H1 (cell line): ENCODE measurements at regions of chr12 and their contacts with region 1.

Region 1: DNA sequence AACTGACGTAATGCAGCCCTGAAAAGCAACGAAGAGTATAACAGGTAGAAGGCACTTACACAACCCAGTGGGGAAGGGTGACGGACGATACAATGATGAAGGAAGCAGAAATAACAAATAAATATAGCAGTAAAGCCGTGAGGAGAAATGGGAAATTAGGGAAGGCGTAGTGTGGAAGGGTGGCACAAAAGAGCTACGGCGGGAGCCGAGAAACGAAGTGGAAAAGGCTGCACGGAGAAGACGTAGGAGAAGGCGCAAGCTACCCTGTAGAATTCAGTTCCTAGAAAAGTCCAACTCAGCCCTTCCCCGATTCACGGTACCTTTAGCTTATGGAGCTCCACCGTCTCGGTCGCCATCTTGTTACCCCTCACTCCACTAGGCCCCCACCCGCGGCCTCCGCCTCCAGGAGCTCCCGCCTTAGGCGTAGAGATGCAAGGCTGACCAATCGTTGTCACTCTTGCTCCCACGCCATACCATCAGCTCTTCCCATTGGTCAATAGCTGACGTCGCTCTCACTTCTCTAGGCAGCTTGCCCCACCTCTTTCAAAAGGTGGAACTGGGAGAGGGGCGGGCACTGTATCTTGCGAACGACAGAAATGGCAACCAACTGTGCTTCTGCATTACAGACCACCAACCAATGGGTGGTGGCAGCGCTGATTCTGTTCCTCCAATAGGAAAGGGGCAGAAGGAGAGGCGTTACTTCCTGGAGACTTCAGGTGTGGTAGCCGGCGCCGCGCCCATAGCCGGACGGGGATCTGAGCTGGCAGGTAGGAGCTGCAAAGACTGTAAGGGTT is at the starts of genes ORMDL2 and SARNP:
- DNase-seq: peak; percentile 90 to 99
- H3K4me3 ChIP-seq: peak within 1 kb of the TSS; percentile 95 to 100 (median 96)
- H3K27ac ChIP-seq: peak within 1 kb of the TSS; percentile 91
- H3K4me1 ChIP-seq: peaks cover 4 to 8% (median 6%) of the 10 kb centered on the region in 4 experiments
- H3K27me3 ChIP-seq: no peaks in the 10 kb centered on the region
- CTCF ChIP-seq: no peak
- EP300 ChIP-seq: no peak
- POLR2A ChIP-seq: peak; percentile 62 to 93
- RAD21 ChIP-seq: no peak
- total RNA-seq, gene ORMDL2: 34.1 and 39.0 TPM in 2 replicates
- total RNA-seq, gene SARNP: 114 and 117 TPM in 2 replicates

Region 2: DNA sequence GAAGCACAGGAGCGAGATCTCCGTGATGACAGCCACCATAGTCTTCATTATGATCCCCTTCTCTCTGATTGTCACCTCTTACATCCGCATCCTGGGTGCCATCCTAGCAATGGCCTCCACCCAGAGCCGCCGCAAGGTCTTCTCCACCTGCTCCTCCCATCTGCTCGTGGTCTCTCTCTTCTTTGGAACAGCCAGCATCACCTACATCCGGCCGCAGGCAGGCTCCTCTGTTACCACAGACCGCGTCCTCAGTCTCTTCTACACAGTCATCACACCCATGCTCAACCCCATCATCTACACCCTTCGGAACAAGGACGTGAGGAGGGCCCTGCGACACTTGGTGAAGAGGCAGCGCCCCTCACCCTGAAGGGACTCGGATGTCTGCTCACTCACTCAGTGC is 180.1 kb before region 1 on chr12:
- CTCF ChIA-PET with region 1: no interaction called
- POLR2A ChIA-PET with region 1: no interaction called
- DNase-seq: no peak
- H3K4me3 ChIP-seq: no peak overlapping the region
- H3K27ac ChIP-seq: no peak overlapping the region
- H3K4me1 ChIP-seq: no peaks in the 10 kb centered on the region
- H3K27me3 ChIP-seq: no peaks in the 10 kb centered on the region
- CTCF ChIP-seq: no peak
- EP300 ChIP-seq: no peak
- POLR2A ChIP-seq: no peak
- RAD21 ChIP-seq: no peak

Region 3: GRCh38 chr12:55745361-55746146 is 72.0 kb before region 1 on chr12:
- CTCF ChIA-PET with region 1: interaction called, 224 read pairs
- POLR2A ChIA-PET with region 1: interaction called, 64 read pairs
- DNase-seq: peak in 1 of 2 experiments; percentile 77
- H3K4me3 ChIP-seq: peak overlapping the region; percentile 80 to 99 (median 92)
- H3K27ac ChIP-seq: peak overlapping the region; percentile 48; the same call in 1 of the 2 replicates
- H3K4me1 ChIP-seq: peaks cover 8 to 37% (median 23%) of the 10 kb centered on the region in 4 experiments
- H3K27me3 ChIP-seq: no peaks in the 10 kb centered on the region
- CTCF ChIP-seq: no peak
- EP300 ChIP-seq: peak in 1 of 2 experiments; percentile 23; a peak in 1 of 3 replicates
- POLR2A ChIP-seq: peak in 1 of 2 experiments; percentile 19; a peak in 1 of 3 replicates
- RAD21 ChIP-seq: no peak

Region 4: DNA sequence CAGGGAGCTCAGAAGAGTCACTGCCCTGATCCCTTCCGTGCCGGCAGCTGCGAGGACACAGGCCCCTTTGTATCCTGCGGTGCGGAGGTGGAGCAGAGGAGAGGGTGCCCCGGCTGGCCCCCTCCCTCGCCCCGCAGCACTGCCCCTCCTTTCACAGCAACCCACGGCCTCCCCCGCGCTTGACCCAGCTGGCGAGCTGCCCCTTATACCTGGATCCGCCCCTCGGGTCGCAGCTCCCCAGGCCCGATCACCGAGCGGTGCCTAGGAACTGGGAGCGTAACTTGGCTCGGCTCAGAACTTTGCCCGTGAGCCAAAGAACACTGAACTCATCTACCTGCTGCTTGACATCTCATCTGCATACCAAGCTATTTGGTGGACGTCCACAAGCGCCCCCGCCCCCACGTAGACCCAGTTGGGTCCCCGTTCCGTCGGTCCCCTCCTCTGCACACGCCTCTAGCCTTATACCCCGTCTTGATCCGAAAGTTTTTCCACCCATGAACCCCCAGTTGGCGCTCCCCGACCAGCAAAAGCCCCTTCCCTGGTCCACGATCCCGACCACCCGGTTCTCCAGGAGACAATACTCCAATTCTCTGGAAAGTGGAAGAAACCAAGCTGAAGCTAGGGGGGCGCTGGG is 12.5 kb after region 1 on chr12:
- CTCF ChIA-PET with region 1: interaction called, 59 read pairs
- POLR2A ChIA-PET with region 1: interaction called, 133 read pairs
- DNase-seq: peak in 1 of 2 experiments; percentile 84
- H3K4me3 ChIP-seq: peak overlapping the region; percentile 59 to 97 (median 86)
- H3K27ac ChIP-seq: peak overlapping the region; percentile 92
- H3K4me1 ChIP-seq: peaks cover 1 to 16% (median 6%) of the 10 kb centered on the region in 4 experiments
- H3K27me3 ChIP-seq: no peaks in the 10 kb centered on the region
- CTCF ChIP-seq: 0 out of 4 replicates have a peak, but pooled peaks of 1 of the 3 experiments have one; percentile 2
- EP300 ChIP-seq: no peak
- POLR2A ChIP-seq: peak in 1 of 2 experiments; percentile 53; a peak in 1 of 3 replicates
- RAD21 ChIP-seq: peak in 1 of 2 experiments; percentile 39; a peak in 2 of 4 replicates

Region 5: DNA sequence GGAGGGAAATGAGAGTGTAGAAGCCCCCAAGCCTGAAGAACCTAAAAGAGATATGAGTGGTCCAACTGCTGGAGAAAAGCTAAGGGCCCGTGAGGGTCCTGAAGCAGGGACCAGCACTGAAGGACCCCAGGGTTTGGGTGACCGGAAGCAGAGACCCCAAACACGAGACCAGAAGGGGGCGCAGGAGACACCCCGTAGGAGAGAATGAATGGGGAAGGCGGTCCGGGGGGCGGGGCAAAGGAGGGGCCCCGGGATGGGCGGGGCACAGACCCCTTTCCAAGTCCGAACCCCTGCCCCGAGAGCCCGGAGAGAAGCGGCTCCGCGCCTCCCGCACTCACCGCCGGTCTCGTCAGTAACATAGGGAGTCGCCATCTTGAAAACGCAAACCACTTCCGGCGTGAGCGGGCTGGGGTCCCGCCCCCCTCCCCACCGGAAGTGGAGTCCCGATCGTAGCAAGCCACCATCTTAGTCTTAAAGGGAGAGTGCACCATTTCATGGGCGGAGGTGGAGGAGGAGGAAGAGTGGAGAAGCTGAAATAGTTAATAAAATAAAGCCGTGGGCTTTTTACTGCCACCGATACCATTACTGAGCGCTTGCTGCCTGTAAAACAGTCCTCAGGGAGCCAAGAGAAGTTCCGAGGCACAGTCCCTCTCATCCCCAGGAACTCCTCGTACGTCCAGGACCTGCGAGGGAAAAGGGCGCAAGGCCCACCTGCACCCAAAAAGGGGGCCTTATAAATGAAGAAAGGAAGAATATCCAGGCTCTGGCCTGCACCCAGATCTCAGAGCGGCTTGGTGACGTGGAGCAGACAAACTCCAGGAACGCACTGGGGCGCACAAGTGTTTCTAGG is 109.4 kb after region 1 on chr12:
- CTCF ChIA-PET with region 1: interaction called, 24 read pairs
- POLR2A ChIA-PET with region 1: interaction called, 17 read pairs
- DNase-seq: peak; percentile 84 to 94
- H3K4me3 ChIP-seq: peak overlapping the region; percentile 90 to 100 (median 94)
- H3K27ac ChIP-seq: peak overlapping the region; percentile 84
- H3K4me1 ChIP-seq: peaks cover 8 to 19% (median 11%) of the 10 kb centered on the region in 4 experiments; a peak in 6 of 7 replicates
- H3K27me3 ChIP-seq: peaks cover 0 to 6% (median 1%) of the 10 kb centered on the region in 4 experiments; a peak in 2 of 7 replicates
- CTCF ChIP-seq: peak; percentile 51 to 66 (median 59)
- EP300 ChIP-seq: no peak
- POLR2A ChIP-seq: peak in 1 of 2 experiments; percentile 39; a peak in 2 of 3 replicates
- RAD21 ChIP-seq: peak; percentile 23 to 35; a peak in 3 of 4 replicates